Posterior cingulate gyrus (tissue), 11 donors: ENCODE measurements at regions of chr7 and their contacts with region 1.

Region 1: GRCh38 chr7:64665980-64666662 is at the start of gene ZNF107:
- DNase-seq: peak; percentile 89 to 99 (median 96)

Region 2: DNA sequence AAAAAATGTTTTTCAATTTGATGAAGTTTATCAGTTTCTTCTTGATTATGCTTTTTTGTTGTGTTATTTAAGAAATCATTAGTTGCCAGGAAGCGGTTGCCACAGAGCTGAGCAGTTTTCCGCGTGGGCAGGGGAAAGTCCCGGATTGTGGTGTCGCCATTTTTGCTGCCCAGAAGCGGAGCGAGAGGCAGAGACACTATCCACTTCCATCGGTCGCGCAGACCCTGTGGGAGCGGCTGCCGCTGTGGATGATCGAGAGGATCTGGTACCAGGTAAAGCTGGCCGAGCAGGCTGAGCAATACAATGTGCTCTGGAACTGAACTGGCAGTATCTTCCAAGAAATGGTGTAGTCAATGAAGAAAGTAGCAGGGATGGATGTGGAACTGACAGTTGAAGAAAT is 232.5 kb before region 1 on chr7:
- intact Hi-C with region 1: no loop called
- DNase-seq: no peak

Region 3: DNA sequence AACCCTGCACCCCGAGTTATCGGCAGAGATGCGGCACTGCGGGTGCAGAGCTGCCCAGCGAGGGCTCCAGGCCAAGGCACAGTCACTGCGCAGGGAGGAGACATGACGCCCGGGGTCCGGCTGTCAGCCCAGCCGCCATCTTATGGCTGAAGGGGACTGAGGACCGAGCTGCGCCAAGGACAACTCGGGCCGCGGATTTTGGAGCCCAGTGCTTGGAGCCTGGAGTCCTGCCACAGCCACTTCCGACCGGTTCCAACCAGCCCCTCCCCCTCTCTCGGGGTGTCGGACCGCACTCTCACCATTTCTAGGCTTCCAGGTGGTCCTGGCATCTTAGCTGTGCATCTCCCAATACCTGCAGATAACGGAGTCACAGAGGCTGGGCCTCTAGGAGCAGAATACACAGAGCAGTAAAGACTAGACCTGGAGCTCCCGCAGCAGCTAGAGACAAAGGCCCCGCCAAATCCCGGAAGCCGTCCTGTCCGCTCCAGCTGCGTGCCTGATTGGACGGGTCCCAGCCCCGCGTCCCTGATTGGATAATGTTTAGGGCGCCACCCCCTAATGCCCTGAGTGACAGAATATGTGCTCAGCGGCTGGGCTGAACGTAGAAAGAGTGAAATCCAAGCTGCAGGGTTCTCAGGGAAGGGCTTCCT is 103.4 kb before region 1 on chr7 and contains the start of gene ZNF680:
- intact Hi-C with region 1: loop called (anchors 5 kb)
- DNase-seq: peak; percentile 95 to 99 (median 97)

Region 4: DNA sequence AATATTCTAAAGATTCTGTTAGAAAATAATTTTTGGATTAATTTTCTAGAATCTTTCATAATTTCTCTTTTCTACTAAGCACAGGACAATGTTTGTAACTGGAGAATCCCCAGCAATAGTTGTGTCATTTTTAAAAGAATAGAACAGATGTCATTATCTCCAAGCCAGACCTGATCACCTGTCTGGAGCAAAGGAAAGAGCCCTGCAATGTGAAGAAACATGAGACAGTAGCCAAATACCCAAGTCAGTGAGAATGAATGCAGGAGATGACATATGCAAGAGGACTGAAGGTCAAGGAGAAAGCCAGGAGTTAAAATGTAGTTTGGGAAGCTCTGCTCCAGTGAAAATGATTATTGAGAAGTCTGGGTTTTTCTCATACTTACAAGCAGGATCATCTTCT is 102.7 kb after region 1 on chr7:
- intact Hi-C with region 1: no loop called
- DNase-seq: no peak

Region 5: GRCh38 chr7:64794171-64794844 is 128.2 kb after region 1 on chr7 and contains the start of gene ZNF138:
- intact Hi-C with region 1: loop called (anchors 10 kb)
- DNase-seq: peak; percentile 92 to 100 (median 97)